ENCODE measurements at regions of chr7 and their contacts with region 1.

Region 1: DNA sequence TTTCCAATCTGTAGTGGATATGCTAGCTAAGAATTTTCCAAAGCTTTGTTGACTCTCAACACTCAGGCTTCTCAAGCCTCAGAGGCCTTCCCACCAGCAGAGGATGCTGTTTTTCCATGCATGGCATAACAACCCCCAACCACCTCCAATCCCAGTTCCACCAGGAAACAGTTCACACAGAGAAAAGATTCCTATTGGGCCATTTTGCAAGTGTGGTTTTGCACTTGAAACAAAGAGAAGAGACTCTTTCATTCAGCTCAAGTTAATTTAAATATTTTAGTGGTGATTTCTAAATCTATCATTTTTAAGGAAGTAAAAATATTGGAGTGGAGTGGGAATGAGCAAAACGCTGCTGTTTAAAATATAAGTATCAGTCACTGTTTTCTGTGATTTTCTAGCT is 105.6 kb upstream of the COL1A2 start:
- DNase-seq: peak; percentile 80
- H3K4me3 ChIP-seq: no peak overlapping the region
- H3K27ac ChIP-seq: no peak overlapping the region
- H3K27me3 ChIP-seq: no peaks in the 10 kb centered on the region
- CTCF ChIP-seq: peak; percentile 100

Region 2: DNA sequence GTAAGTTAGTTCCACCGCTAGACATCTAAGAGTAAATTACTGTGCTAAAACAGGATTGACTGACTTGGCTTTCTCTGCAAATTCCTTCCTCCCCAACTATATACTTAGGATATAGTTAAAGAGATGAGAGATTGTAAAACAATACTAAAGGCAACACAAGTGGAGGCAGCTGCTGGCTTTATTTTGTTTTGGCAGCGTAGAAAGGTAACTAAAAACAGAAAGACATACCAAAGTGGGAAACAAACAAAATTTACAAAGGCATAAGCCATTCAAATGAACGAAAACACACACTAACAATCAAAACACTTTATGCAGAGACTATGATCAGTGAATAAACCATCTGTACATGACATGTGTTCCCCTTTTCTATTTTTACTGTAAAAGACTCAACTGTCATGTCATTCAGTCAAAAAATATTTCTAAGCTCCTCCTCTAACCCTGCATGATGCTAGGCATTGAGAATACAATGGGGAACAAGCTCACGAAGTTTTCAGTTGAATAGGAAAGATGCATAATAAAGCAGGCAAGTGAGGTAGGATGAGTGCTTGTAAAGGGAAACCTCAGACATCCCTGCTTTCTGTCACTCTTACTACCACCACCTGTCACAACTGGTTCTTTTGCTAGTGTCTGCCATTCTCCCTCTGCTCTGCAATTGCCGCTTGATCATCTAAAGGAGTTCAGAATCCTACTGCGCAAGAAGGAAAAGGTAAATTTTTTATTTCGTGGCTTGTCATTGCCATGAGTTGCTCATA is 41.4 kb after region 1 on chr7:
- CTCF ChIA-PET with region 1: no interaction called
- POLR2A ChIA-PET with region 1: no interaction called
- DNase-seq: no peak
- H3K4me3 ChIP-seq: no peak overlapping the region
- H3K27ac ChIP-seq: no peak overlapping the region
- H3K27me3 ChIP-seq: no peaks in the 10 kb centered on the region
- CTCF ChIP-seq: no peak

Region 3: GRCh38 chr7:94374231-94374630 is 85.2 kb after region 1 on chr7:
- CTCF ChIA-PET with region 1: interaction called, 32 read pairs
- POLR2A ChIA-PET with region 1: interaction called, 15 read pairs
- DNase-seq: peak; percentile 87
- H3K4me3 ChIP-seq: peak overlapping the region; percentile 50
- H3K27ac ChIP-seq: peak overlapping the region; percentile 93
- H3K27me3 ChIP-seq: no peaks in the 10 kb centered on the region
- CTCF ChIP-seq: peak; percentile 14; the same call in 1 of the 2 replicates

Region 4: DNA sequence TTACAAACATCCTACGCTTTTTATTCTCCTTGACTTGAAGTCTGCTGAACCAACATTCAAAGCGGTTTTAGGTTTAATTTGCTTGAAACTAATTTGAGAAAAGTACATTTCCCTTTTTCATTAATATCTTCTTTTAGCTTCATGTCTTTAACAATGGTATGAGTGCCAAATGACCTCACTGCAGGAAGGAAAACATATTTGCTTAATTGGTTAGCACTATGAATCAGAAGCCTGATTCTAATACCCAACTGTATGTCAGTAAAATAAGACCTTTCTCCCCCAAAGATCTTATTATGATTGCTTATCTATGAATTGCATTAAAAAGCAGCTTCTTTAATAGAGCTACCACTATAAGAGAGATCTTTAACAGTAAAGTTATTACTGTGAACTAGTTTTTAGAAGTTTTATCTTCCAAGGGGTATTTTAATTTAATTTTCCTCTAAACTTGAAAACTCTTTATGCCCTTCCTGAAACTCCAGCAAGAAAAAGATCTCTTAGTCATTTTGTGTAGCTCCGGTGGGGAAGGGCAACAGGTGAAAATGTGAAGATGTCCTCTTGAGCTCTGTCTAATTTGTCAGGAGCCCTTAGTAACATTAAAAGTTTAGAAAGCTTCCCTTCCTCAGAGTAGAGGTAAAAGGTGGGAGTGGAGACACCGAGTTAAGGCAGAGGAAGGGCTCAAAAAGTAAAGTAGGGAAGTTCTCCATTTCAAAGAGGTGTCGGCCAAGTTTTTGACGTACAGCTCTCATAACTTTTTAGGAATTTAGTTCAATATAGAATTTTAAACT is 111.8 kb after region 1 on chr7:
- CTCF ChIA-PET with region 1: interaction called, 482 read pairs
- POLR2A ChIA-PET with region 1: interaction called, 450 read pairs
- DNase-seq: no peak
- H3K4me3 ChIP-seq: peak overlapping the region; percentile 96
- H3K27ac ChIP-seq: peak overlapping the region; percentile 66
- H3K27me3 ChIP-seq: no peaks in the 10 kb centered on the region
- CTCF ChIP-seq: no peak

Region 5: GRCh38 chr7:94423863-94424735 is 135.0 kb after region 1 on chr7:
- CTCF ChIA-PET with region 1: interaction called, 21 read pairs
- POLR2A ChIA-PET with region 1: interaction called, 4 read pairs
- DNase-seq: peak; percentile 42
- H3K4me3 ChIP-seq: no peak overlapping the region
- H3K27ac ChIP-seq: peak overlapping the region; percentile 89
- H3K27me3 ChIP-seq: no peaks in the 10 kb centered on the region
- CTCF ChIP-seq: no peak

Region 6: GRCh38 chr7:94449148-94449725 is 160.2 kb after region 1 on chr7:
- CTCF ChIA-PET with region 1: interaction called, 35 read pairs
- POLR2A ChIA-PET with region 1: no interaction called
- DNase-seq: no peak
- H3K4me3 ChIP-seq: no peak overlapping the region
- H3K27ac ChIP-seq: no peak overlapping the region
- H3K27me3 ChIP-seq: no peaks in the 10 kb centered on the region
- CTCF ChIP-seq: peak; percentile 65